ENCODE measurements at regions of chr10 and their contacts with region 1.

Region 1: GRCh38 chr10:86261941-86262687 is 104.5 kb downstream of the GRID1 start:
- DNase-seq: peak in 1 of 2 experiments; percentile 55
- H3K4me3 ChIP-seq: no peak overlapping the region
- H3K4me3 Mint-ChIP-seq: no peak overlapping the region
- H3K27ac Mint-ChIP-seq: no peak overlapping the region
- H3K4me1 ChIP-seq: no peaks in the 10 kb centered on the region
- H3K4me1 Mint-ChIP-seq: no peaks in the 10 kb centered on the region
- H3K27me3 ChIP-seq: no peaks in the 10 kb centered on the region
- H3K27me3 Mint-ChIP-seq: peaks cover 10% of the 10 kb centered on the region
- CTCF ChIP-seq: peak; percentile 28 to 61

Region 2: DNA sequence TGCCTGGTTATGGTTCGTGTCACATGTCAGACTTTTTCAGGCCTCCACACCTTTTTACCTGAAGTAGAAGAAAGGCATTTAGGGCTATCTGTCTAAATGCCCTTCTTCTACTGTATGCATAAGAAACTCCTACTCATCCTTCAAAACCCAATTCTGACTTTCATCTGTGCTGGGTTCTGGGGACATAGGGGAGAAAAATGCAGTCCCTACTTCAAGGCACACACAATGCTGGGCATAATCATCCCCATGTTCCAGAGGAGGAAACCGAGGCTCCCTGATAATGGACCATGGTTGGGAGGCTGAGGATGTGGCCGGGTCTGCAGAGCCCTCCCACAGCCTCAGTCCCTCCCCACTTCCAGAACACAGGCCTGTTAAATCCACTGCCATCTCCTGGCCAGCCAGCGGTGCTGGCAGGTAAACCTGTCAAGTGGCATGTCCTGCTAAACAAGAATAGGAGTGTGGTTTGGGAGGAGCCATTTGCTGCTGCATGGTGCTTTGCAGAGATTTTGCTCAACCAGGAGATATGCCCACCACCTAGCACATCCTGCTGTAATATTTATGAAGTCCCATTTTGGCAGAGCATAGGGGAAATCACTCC is 72.5 kb after region 1 on chr10:
- CTCF ChIA-PET with region 1: no interaction called
- POLR2A ChIA-PET with region 1: no interaction called
- intact Hi-C with region 1: loop called (anchors 5 kb)
- DNase-seq: peak; percentile 38 to 47
- H3K4me3 ChIP-seq: no peak overlapping the region
- H3K4me3 Mint-ChIP-seq: no peak overlapping the region
- H3K27ac Mint-ChIP-seq: no peak overlapping the region
- H3K4me1 ChIP-seq: no peaks in the 10 kb centered on the region
- H3K4me1 Mint-ChIP-seq: no peaks in the 10 kb centered on the region
- H3K27me3 ChIP-seq: no peaks in the 10 kb centered on the region
- H3K27me3 Mint-ChIP-seq: peaks cover 7% of the 10 kb centered on the region
- CTCF ChIP-seq: peak in 1 of 2 experiments; percentile 36

Measured in Caco-2 (cell line).